CD8-positive, alpha-beta memory T cell (primary cell): ENCODE measurements at regions of chr2 and their contacts with region 1.

Region 1: DNA sequence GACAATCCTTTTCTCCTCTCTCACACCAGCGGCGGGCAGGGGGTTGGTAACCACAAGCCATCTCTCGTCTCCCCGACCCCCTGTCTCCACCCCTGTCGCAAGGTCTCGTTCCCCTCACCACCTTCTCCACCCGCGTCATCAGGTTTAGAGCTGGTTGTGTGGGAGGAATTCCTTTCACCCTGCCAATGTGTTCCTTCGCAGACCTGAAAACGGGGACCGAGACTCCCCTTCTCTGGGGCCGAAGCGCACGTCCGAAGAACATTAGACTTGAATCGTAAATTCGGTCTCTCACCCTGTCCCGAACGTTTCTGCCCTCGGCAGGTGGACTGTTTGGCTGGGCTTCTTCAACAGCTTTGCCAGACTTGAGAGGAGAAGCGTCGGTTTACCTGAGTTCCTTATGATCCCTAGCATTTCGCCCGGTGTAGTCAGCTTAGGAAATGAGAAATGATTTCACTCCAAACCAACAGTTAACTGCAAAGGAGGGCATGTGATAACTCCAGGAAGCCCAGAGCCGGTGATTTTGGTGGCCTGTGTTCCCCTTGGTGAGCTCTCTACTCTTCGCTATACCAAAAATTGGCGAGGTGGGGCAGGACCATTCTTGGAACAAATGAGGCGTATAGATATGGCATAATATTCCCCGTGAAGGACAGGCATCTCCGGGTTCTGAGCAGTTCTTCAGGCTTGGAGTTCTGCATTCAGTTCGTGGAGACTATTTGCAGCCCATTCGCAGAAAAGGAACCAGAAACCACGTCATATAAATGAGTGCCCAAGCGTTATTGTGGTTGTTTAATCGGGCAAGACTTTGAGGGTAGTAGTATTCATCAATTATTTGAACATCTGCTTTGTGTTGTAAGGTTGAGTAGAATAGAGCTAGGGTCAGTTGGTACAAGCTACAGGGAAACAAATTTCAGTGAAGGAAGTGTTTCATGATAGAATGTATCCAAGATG is 694 bp downstream of the CFAP36 start:
- DNase-seq: peak in 2 of 5 donors; percentile 19 to 34
- H3K4me3 ChIP-seq: peak overlapping the region; percentile 99
- H3K4me3 Mint-ChIP-seq: peak overlapping the region; percentile 87 to 99 (median 96)
- H3K27ac ChIP-seq: peak overlapping the region; percentile 97
- H3K27ac Mint-ChIP-seq: peak overlapping the region; percentile 95 to 100 (median 99)
- H3K4me1 ChIP-seq: peaks cover 4% of the 10 kb centered on the region
- H3K4me1 Mint-ChIP-seq: peaks cover 14 to 26% (median 26%) of the 10 kb centered on the region in 3 donors
- H3K27me3 ChIP-seq: no peaks in the 10 kb centered on the region
- H3K27me3 Mint-ChIP-seq: peaks cover 0 to 5% of the 10 kb centered on the region in 2 donors

Region 2: DNA sequence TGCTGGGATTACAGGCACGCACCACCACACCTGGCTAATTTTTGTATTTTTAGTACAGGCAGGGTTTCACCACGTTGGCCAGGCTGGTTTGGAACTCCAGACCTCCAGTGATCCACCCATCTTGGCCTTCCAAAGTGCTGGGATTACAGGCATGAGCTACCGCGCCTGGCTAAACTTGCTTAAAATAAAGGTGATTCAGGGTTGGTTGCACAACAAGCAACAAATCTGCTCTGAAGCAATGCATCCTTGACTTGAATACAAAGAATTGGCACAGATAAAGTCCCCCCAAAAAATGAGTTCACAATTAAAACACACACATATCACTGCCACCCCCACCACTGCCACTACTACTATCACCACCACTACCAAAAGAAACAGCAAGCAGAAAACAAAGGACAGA is 135.4 kb before region 1 on chr2:
- CTCF ChIA-PET with region 1: no interaction called
- POLR2A ChIA-PET with region 1: no interaction called
- DNase-seq: no peak
- H3K4me3 ChIP-seq: no peak overlapping the region
- H3K4me3 Mint-ChIP-seq: no peak overlapping the region
- H3K27ac ChIP-seq: no peak overlapping the region
- H3K27ac Mint-ChIP-seq: no peak overlapping the region
- H3K4me1 ChIP-seq: no peaks in the 10 kb centered on the region
- H3K4me1 Mint-ChIP-seq: no peaks in the 10 kb centered on the region
- H3K27me3 ChIP-seq: no peaks in the 10 kb centered on the region
- H3K27me3 Mint-ChIP-seq: no peaks in the 10 kb centered on the region

Region 3: DNA sequence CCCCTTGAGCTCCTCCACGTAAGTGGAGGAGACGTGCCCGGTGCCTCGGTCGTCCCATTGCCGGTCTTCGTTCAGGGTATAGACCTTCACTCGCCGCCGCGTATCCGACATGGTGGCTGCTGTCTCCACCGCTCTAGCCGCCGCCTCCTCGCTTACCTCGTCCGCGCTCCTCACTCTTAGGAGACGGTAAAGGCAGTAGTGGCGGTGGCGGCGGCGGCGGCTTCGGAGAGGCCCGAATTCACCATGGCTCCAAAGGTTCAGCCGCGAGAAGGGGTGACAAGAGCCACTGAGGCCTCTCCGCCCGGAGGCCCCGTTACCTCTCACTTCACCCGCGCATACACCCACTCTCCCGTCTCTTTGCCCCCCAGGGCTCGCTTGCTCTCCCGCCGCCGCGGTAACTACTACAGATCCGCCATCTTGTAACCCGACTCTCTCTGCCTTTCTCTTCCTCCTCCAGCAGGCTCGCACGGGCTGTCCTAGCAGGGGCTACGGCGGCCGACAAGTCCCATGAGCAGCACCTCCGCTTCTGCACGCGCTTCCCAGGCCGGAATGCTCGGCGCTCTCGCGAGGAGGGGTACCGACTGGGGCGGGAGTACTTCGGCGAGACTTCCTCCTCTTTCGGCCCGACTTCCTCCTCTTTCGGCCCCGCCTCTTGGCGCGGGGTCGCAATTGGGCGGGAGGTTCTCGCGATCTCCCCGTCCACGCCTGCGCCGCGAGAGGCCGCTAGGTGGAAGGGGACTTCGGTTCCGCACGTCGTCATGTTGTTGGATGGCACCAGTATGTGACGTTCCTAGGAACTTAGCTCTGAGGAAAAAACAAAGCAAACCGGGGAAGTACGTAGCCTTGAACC is 97.2 kb after region 1 on chr2 and contains the start of gene PPP4R3B:
- CTCF ChIA-PET with region 1: interaction called, 10 read pairs
- POLR2A ChIA-PET with region 1: interaction called, 41 read pairs
- DNase-seq: peak; percentile 97 to 100 (median 100)
- H3K4me3 ChIP-seq: peak within 1 kb of the TSS; percentile 97
- H3K4me3 Mint-ChIP-seq: no peak within 1 kb of the TSS
- H3K27ac ChIP-seq: peak within 1 kb of the TSS; percentile 99
- H3K27ac Mint-ChIP-seq: no peak within 1 kb of the TSS
- H3K4me1 ChIP-seq: peaks cover 64% of the 10 kb centered on the region
- H3K4me1 Mint-ChIP-seq: peaks cover 32 to 42% (median 36%) of the 10 kb centered on the region in 3 donors
- H3K27me3 ChIP-seq: no peaks in the 10 kb centered on the region
- H3K27me3 Mint-ChIP-seq: no peaks in the 10 kb centered on the region
- total RNA-seq, gene PPP4R3B: 83.0 to 94.0 TPM